ENCODE measurements at regions of chr3 and their contacts with region 1.

Region 1: GRCh38 chr3:188309437-188310269 is 155.7 kb downstream of the LPP start:
- DNase-seq: peak; percentile 38
- H3K4me3 Mint-ChIP-seq: peak overlapping the region; percentile 48
- H3K27ac Mint-ChIP-seq: peak overlapping the region; percentile 79
- H3K4me1 Mint-ChIP-seq: peaks cover 25% of the 10 kb centered on the region
- H3K27me3 Mint-ChIP-seq: peaks cover under 1% of the 10 kb centered on the region

Region 2: DNA sequence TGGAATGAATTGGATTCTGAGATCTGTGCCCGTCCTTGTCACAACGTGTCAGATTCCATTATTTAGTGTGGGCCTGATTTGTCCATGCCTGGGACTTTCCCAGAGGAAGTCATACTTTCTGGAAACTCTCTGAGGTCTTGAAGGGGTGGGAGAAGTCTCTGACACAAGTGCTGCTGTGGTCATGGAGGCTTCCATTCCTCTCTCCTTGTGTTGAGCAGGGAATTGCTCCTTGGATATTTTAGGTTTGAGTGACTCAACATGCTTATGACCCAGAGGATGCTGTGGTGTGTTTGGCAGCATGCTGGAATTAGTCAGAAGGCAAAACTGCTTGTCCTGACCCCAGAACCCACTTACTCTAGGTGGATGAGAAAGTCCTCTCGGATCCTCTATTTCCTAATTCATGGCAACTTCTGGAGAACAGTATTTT is 23.6 kb before region 1 on chr3:
- intact Hi-C with region 1: loop called (anchors 1 kb)
- DNase-seq: no peak
- H3K4me3 Mint-ChIP-seq: no peak overlapping the region
- H3K27ac Mint-ChIP-seq: peak overlapping the region; percentile 5
- H3K4me1 Mint-ChIP-seq: peaks cover 52% of the 10 kb centered on the region
- H3K27me3 Mint-ChIP-seq: no peaks in the 10 kb centered on the region

Region 3: DNA sequence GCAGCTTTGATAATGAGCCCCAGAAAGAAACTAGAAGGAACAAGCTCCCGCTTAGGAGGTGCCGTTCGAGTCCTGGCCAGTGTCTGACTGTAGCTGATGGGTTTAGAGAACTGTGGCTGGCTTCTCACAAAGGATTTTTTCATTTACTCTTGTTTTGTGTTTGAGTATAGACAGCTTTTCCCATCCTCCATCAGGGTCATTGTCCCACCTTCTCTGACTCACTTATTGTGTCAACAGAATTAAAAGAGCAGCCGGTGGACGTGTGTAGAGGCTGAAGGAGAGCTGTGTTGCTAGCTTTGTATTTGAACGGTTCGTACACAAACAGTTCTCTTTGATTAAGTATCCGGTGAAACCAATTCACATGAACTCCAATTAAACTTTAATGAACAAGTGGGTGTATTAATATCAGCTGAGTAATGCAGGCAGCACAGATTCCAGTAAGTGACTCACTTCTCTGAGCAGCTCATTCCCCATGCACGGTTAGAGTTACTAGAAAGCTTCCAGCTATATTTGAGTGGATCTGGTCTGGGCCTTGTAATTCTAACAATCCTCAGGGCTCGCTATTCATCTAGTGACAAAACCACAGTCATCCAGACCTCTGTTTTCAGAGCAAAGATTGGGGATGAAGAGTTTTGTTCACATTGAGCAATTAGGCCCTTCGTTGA is 14.7 kb before region 1 on chr3:
- intact Hi-C with region 1: loop called (anchors 1 kb)
- DNase-seq: no peak
- H3K4me3 Mint-ChIP-seq: no peak overlapping the region
- H3K27ac Mint-ChIP-seq: no peak overlapping the region
- H3K4me1 Mint-ChIP-seq: peaks cover 66% of the 10 kb centered on the region
- H3K27me3 Mint-ChIP-seq: no peaks in the 10 kb centered on the region